Activated CD4-positive, alpha-beta T cell treated with anti-CD3 and anti-CD28 coated beads, Interleukin-2, amount 10 ng/mL, durations not matched to agents 24 days and 14 days (primary cell): ENCODE measurements at regions of chr5 and their contacts with region 1.

Region 1: GRCh38 chr5:110726249-110727024 is at the start of gene TMEM232:
- DNase-seq: peak; percentile 90
- H3K4me3 Mint-ChIP-seq: peak within 1 kb of the TSS; percentile 86
- H3K27ac Mint-ChIP-seq: peak within 1 kb of the TSS; percentile 74
- H3K4me1 Mint-ChIP-seq: peaks cover 6% of the 10 kb centered on the region
- H3K27me3 Mint-ChIP-seq: no peaks in the 10 kb centered on the region
- total RNA-seq, gene TMEM232: 1.6 TPM in 2 replicates

Region 2: GRCh38 chr5:110751902-110752762 is 25.7 kb after region 1 on chr5:
- intact Hi-C with region 1: loop called (anchors 2 kb)
- DNase-seq: peak; percentile 85
- H3K4me3 Mint-ChIP-seq: peak overlapping the region; percentile 62
- H3K27ac Mint-ChIP-seq: peak overlapping the region; percentile 93
- H3K4me1 Mint-ChIP-seq: peaks cover 42% of the 10 kb centered on the region
- H3K27me3 Mint-ChIP-seq: no peaks in the 10 kb centered on the region